Endothelial cell of umbilical vein (primary cell): ENCODE measurements at regions of chr17 and their contacts with region 1.

Region 1: GRCh38 chr17:57946798-57947358 is 8.3 kb downstream of the CUEDC1 start:
- DNase-seq: peak; percentile 70
- H3K4me3 ChIP-seq: peak overlapping the region in 2 of 3 experiments; percentile 8 to 36
- H3K27ac ChIP-seq: no peak overlapping the region
- H3K4me1 ChIP-seq: peaks cover 37% of the 10 kb centered on the region
- H3K27me3 ChIP-seq: no peaks in the 10 kb centered on the region
- CTCF ChIP-seq: no peak
- POLR2A ChIP-seq: no peak

Region 2: GRCh38 chr17:57861000-57861789 is 85.7 kb before region 1 on chr17:
- CTCF ChIA-PET with region 1: interaction called, 45 read pairs
- POLR2A ChIA-PET with region 1: no interaction called
- dilution Hi-C with region 1: no loop called
- intact Hi-C with region 1: no loop called
- DNase-seq: peak; percentile 30
- H3K4me3 ChIP-seq: peak overlapping the region; percentile 21 to 49 (median 31)
- H3K27ac ChIP-seq: no peak overlapping the region
- H3K4me1 ChIP-seq: peaks cover 17% of the 10 kb centered on the region
- H3K27me3 ChIP-seq: no peaks in the 10 kb centered on the region
- CTCF ChIP-seq: no peak
- POLR2A ChIP-seq: no peak

Region 3: GRCh38 chr17:57927048-57927723 is 19.7 kb before region 1 on chr17:
- CTCF ChIA-PET with region 1: interaction called, 4 read pairs
- POLR2A ChIA-PET with region 1: interaction called, 12 read pairs
- dilution Hi-C with region 1: no loop called
- intact Hi-C with region 1: no loop called
- DNase-seq: peak; percentile 73
- H3K4me3 ChIP-seq: no peak overlapping the region
- H3K27ac ChIP-seq: no peak overlapping the region
- H3K4me1 ChIP-seq: peaks cover 27% of the 10 kb centered on the region
- H3K27me3 ChIP-seq: no peaks in the 10 kb centered on the region
- CTCF ChIP-seq: no peak
- POLR2A ChIP-seq: no peak

Region 4: GRCh38 chr17:57935833-57936807 is 10.8 kb before region 1 on chr17:
- CTCF ChIA-PET with region 1: interaction called, 10 read pairs
- POLR2A ChIA-PET with region 1: interaction called, 4 read pairs
- dilution Hi-C with region 1: no loop called
- intact Hi-C with region 1: no loop called
- DNase-seq: no peak
- H3K4me3 ChIP-seq: no peak overlapping the region
- H3K27ac ChIP-seq: peak overlapping the region; percentile 9
- H3K4me1 ChIP-seq: peaks cover 20% of the 10 kb centered on the region
- H3K27me3 ChIP-seq: no peaks in the 10 kb centered on the region
- CTCF ChIP-seq: no peak
- POLR2A ChIP-seq: no peak

Region 5: DNA sequence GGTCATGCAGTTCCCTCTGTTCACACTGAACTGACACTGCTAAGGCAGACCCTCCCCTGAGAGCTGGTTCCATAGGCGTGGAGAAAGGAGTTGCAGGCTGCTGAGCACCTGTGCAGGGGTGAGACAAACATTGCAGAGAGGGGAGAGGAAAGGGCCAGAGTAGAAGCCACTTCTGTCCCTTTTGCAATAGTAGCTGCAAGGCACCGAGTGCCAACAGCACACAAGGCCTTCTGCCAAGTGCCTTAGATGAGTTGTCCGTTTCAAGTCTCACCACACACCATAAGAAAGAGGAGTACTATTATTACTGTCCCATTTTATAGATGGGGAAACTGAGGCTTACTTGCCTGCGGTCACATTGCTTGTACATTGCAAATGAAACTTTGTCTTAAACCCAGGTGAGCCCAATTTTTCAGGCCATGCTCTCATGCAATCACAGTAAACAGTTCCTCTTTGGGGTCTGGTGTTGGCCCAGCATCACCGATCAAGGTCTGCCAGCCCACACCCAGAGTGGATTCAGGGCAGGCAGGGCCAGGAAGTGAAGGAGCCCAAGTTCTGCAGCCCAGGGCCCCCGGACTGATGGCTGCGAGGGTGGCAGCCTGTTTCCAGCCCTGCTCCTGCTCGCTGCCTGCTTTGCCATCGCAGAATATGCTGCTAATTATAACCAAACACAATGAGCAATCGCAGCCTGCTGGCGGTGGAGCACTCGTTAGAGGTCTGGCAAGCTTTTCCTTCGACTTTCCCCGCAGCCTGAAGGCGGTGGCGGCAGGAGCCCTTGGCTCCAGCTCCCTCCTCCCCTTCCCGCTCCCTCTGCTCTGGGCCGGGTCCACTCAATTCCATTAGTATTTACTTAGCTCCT is 99.6 kb after region 1 on chr17:
- CTCF ChIA-PET with region 1: no interaction called
- POLR2A ChIA-PET with region 1: no interaction called
- dilution Hi-C with region 1: no loop called
- intact Hi-C with region 1: no loop called
- DNase-seq: no peak
- H3K4me3 ChIP-seq: no peak overlapping the region
- H3K27ac ChIP-seq: no peak overlapping the region
- H3K4me1 ChIP-seq: no peaks in the 10 kb centered on the region
- H3K27me3 ChIP-seq: peaks cover 11 to 15% of the 10 kb centered on the region in 2 experiments
- CTCF ChIP-seq: no peak
- POLR2A ChIP-seq: no peak